PC-3 (cell line): ENCODE measurements at regions of chrX and their contacts with region 1.

Region 1: DNA sequence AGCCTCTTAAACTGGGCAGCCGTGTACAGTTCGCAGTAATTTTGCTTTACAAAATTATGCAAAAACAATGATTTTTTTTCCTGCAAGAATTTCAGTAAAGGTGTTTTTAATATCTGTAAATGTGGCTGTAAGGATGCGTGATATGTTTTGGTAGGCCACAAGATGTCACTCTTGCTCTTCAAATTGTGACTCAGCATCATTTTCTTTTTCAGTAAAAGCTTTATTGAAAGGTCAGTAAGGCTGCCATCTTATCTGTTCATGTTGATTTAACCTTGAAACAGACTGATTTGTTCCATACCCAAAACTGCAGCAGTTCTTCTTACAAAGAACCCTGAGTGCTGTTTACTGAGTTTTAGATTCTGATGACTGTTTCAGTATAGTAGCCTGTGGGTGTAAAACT is 39.9 kb downstream of the TXLNG start:
- DNase-seq: peak; percentile 54
- ATAC-seq: peak; percentile 20; the same call in 1 of the 2 replicates
- H3K4me3 ChIP-seq: no peak overlapping the region
- H3K27ac ChIP-seq: peak overlapping the region; percentile 77
- H3K4me1 ChIP-seq: peaks cover 40% of the 10 kb centered on the region
- H3K27me3 ChIP-seq: no peaks in the 10 kb centered on the region
- CTCF ChIP-seq: peak; percentile 70

Region 2: GRCh38 chrX:16786139-16786790 is 39.9 kb before region 1 on chrX and contains the start of gene TXLNG:
- CTCF ChIA-PET with region 1: no interaction called
- POLR2A ChIA-PET with region 1: no interaction called
- intact Hi-C with region 1: loop called (anchors 2 kb)
- DNase-seq: peak; percentile 97
- ATAC-seq: peak; percentile 97
- H3K4me3 ChIP-seq: peak within 1 kb of the TSS; percentile 86
- H3K27ac ChIP-seq: peak within 1 kb of the TSS; percentile 49; the same call in 1 of the 2 replicates
- H3K4me1 ChIP-seq: peaks cover 8% of the 10 kb centered on the region
- H3K27me3 ChIP-seq: no peaks in the 10 kb centered on the region
- CTCF ChIP-seq: no peak
- total RNA-seq, gene TXLNG: 17.1 and 18.9 TPM in 2 replicates

Region 3: GRCh38 chrX:16882702-16883486 is 56.7 kb after region 1 on chrX:
- CTCF ChIA-PET with region 1: interaction called, 5 read pairs
- POLR2A ChIA-PET with region 1: no interaction called
- intact Hi-C with region 1: loop called (anchors 2 kb)
- DNase-seq: peak; percentile 85
- ATAC-seq: peak; percentile 81
- H3K4me3 ChIP-seq: peak overlapping the region; percentile 74
- H3K27ac ChIP-seq: peak overlapping the region; percentile 13; the same call in 1 of the 2 replicates
- H3K4me1 ChIP-seq: peaks cover 3% of the 10 kb centered on the region; the same call in 1 of the 2 replicates
- H3K27me3 ChIP-seq: no peaks in the 10 kb centered on the region
- CTCF ChIP-seq: peak; percentile 81

Region 4: DNA sequence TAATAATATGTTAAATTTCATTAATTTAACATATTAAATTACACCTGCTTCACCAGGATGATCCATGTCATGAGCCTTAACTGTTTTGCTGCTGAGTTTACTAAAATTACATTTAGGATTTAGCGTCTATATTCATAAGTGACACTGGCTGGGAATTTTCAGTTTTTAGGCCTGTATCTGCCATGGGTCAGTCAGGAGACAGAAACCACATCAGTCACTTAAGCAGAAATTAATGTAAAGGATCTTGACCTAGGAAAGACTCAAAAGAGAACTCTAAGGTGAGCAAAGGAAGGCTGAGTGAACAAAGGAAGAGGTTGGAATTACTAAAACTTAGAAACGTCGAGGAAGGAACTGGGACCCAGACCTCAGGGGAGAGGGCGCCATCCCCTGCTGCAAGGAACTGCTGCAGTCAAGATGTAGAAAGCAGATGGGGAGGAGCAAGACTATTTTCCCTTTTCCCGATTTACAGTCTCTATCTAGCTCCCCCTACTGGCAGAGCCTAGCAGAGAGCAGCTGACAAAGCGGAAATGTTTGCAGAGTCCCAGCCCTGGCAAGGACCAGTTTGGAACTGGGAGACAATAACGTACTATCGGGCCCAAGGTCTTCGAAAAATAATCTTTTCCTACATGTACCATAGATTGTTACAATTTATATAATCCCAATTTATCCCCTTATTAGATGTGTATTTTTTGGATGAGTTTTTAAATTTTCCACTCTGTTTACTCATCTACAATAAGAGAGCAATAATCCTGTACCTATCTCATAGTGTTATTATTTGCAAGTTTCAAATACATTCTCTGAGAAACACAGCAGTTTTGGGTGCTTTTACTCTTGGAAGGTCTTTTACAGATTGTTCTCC is 66.5 kb after region 1 on chrX:
- CTCF ChIA-PET with region 1: no interaction called
- POLR2A ChIA-PET with region 1: no interaction called
- intact Hi-C with region 1: loop called (anchors 1 kb)
- DNase-seq: peak; percentile 85
- ATAC-seq: peak; percentile 91
- H3K4me3 ChIP-seq: peak overlapping the region; percentile 30; the same call in 1 of the 2 replicates
- H3K27ac ChIP-seq: no peak overlapping the region
- H3K4me1 ChIP-seq: no peaks in the 10 kb centered on the region
- H3K27me3 ChIP-seq: no peaks in the 10 kb centered on the region
- CTCF ChIP-seq: peak; percentile 91